B cell (primary cell): ENCODE measurements at regions of chr13 and their contacts with region 1.

Region 1: GRCh38 chr13:25375727-25376358 is 4.1 kb downstream of the ATP8A2 start:
- DNase-seq: peak; percentile 64
- ATAC-seq: no peak
- H3K4me3 ChIP-seq: no peak overlapping the region
- H3K4me3 Mint-ChIP-seq: no peak overlapping the region
- H3K27ac ChIP-seq: no peak overlapping the region
- H3K27ac Mint-ChIP-seq: no peak overlapping the region
- H3K4me1 ChIP-seq: peaks cover 7 to 11% of the 10 kb centered on the region in 2 donors
- H3K4me1 Mint-ChIP-seq: peaks cover 13% of the 10 kb centered on the region
- H3K27me3 ChIP-seq: peaks cover 0 to 38% (median 19%) of the 10 kb centered on the region in 4 experiments
- H3K27me3 Mint-ChIP-seq: peaks cover 62% of the 10 kb centered on the region
- CTCF ChIP-seq: peak; percentile 81

Region 2: GRCh38 chr13:24995226-24995804 is 380.5 kb before region 1 on chr13:
- CTCF ChIA-PET with region 1: interaction called, 7 read pairs
- POLR2A ChIA-PET with region 1: no interaction called
- intact Hi-C with region 1: loop called (anchors 1 kb)
- DNase-seq: peak; percentile 77
- ATAC-seq: peak; percentile 65
- H3K4me3 ChIP-seq: no peak overlapping the region
- H3K4me3 Mint-ChIP-seq: no peak overlapping the region
- H3K27ac ChIP-seq: no peak overlapping the region
- H3K27ac Mint-ChIP-seq: no peak overlapping the region
- H3K4me1 ChIP-seq: no peaks in the 10 kb centered on the region
- H3K4me1 Mint-ChIP-seq: peaks cover 3% of the 10 kb centered on the region
- H3K27me3 ChIP-seq: peaks cover 0 to 9% (median 0%) of the 10 kb centered on the region in 4 experiments
- H3K27me3 Mint-ChIP-seq: peaks cover 40% of the 10 kb centered on the region
- CTCF ChIP-seq: peak; percentile 94

Region 3: GRCh38 chr13:25001476-25002206 is 374.2 kb before region 1 on chr13:
- CTCF ChIA-PET with region 1: interaction called, 10 read pairs
- POLR2A ChIA-PET with region 1: no interaction called
- intact Hi-C with region 1: no loop called
- DNase-seq: no peak
- ATAC-seq: no peak
- H3K4me3 ChIP-seq: no peak overlapping the region
- H3K4me3 Mint-ChIP-seq: no peak overlapping the region
- H3K27ac ChIP-seq: no peak overlapping the region
- H3K27ac Mint-ChIP-seq: no peak overlapping the region
- H3K4me1 ChIP-seq: no peaks in the 10 kb centered on the region
- H3K4me1 Mint-ChIP-seq: no peaks in the 10 kb centered on the region
- H3K27me3 ChIP-seq: peaks cover 0 to 3% (median 2%) of the 10 kb centered on the region in 4 experiments
- H3K27me3 Mint-ChIP-seq: peaks cover 37% of the 10 kb centered on the region
- CTCF ChIP-seq: no peak

Region 4: GRCh38 chr13:25085125-25085742 is 290.6 kb before region 1 on chr13:
- CTCF ChIA-PET with region 1: interaction called, 19 read pairs
- POLR2A ChIA-PET with region 1: no interaction called
- intact Hi-C with region 1: no loop called
- DNase-seq: peak; percentile 30
- ATAC-seq: no peak
- H3K4me3 ChIP-seq: no peak overlapping the region
- H3K4me3 Mint-ChIP-seq: no peak overlapping the region
- H3K27ac ChIP-seq: no peak overlapping the region
- H3K27ac Mint-ChIP-seq: no peak overlapping the region
- H3K4me1 ChIP-seq: no peaks in the 10 kb centered on the region
- H3K4me1 Mint-ChIP-seq: peaks cover 3% of the 10 kb centered on the region
- H3K27me3 ChIP-seq: no peaks in the 10 kb centered on the region
- H3K27me3 Mint-ChIP-seq: peaks cover 13% of the 10 kb centered on the region
- CTCF ChIP-seq: peak; percentile 59

Region 5: DNA sequence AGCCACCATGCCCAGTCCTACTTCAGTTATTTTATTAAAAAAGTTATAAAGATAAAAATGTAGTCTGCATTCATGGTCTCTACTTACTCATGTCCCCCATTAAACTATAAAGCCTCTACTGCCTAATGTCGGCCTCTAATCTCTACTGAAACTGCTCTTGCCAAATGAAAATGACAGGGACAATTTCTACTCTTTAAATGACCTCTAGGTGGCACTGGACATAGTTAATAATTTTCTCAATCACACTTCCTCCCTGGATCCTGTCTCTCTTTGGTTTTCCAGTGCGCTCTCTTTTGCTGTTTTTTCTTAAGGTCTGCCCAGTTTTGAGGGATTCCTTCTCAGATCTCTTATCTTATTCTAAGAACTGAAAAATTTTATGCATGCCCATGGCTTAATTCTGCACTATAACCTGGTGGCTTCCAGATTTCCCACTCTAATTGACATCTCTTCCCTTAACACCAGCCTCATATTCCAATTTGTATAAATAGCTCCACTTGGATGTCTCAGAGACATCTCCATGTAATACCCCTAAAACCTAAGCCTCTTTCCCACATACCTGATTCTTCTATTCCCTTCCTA is 142.8 kb before region 1 on chr13:
- CTCF ChIA-PET with region 1: interaction called, 23 read pairs
- POLR2A ChIA-PET with region 1: no interaction called
- intact Hi-C with region 1: loop called (anchors 1 kb)
- DNase-seq: peak; percentile 64
- ATAC-seq: no peak
- H3K4me3 ChIP-seq: no peak overlapping the region
- H3K4me3 Mint-ChIP-seq: no peak overlapping the region
- H3K27ac ChIP-seq: no peak overlapping the region
- H3K27ac Mint-ChIP-seq: no peak overlapping the region
- H3K4me1 ChIP-seq: peaks cover 0 to 3% of the 10 kb centered on the region in 2 donors
- H3K4me1 Mint-ChIP-seq: peaks cover 18% of the 10 kb centered on the region
- H3K27me3 ChIP-seq: peaks cover 0 to 4% (median 0%) of the 10 kb centered on the region in 4 experiments
- H3K27me3 Mint-ChIP-seq: peaks cover 20% of the 10 kb centered on the region
- CTCF ChIP-seq: peak; percentile 80